Cardiac septum (tissue), 1 donor: ENCODE measurements at regions of chr3 and their contacts with region 1.

Region 1: DNA sequence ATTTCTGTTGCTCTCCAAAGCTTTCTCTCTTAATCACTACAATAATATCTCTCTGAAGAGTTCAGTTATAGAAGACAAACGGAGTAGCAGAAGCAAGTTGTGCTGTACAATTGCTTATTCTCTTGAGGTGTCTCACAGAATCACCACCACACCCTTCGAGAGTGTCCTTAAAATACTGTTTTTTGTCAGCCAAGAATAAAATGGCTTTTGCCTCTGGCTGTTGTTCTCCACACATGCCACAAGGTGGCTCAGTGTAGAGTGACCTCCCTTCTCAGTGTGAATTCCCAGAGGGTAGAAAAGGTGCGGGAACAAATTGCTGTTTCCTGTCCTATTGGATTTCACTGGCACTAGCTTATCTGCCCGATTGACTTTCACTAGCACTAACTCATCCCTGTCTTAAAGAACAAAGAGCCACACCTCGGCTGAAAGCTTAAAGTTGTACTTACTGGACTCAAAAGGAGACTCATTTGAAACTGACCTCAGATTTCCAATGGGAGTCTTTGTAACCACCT is 134.2 kb upstream of the SATB1 start:
- DNase-seq: no peak

Region 2: DNA sequence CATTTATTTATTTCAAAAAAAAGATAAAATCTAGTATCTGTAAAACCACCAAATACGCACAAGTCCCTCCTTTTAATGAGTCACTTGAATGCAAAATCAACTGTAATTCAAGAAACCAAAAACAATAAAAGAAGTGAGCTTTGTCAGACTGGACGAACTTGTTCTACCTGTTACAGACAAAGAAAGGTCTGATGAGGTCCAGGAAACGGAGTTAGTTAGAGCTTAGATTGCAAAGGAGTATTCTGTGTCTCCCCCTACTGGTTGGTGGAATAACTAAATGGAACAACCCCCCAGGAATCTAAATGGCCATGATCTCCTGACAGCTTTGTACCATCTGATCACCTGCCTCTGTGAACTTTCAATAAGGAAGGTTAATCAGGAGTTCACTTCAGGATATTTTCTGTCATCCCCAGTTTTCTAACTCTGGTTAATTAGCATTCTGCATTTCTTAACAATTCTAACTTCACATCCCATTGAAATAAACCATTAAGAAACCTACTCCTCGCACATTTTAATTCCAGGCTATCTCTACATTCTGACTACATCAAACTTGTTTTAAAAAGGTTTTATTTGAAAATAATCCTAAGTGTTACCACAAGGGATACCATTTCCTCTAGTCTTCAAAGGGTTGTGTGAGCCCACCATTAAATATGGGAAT is 198.8 kb after region 1 on chr3:
- intact Hi-C with region 1: loop called (anchors 5 kb)
- DNase-seq: no peak

Region 3: GRCh38 chr3:18988614-18989229 is 429.3 kb after region 1 on chr3:
- intact Hi-C with region 1: loop called (anchors 5 kb)
- DNase-seq: no peak